Right ventricle myocardium inferior (tissue), 1 donor: ENCODE measurements at regions of chr13 and their contacts with region 1.

Region 1: DNA sequence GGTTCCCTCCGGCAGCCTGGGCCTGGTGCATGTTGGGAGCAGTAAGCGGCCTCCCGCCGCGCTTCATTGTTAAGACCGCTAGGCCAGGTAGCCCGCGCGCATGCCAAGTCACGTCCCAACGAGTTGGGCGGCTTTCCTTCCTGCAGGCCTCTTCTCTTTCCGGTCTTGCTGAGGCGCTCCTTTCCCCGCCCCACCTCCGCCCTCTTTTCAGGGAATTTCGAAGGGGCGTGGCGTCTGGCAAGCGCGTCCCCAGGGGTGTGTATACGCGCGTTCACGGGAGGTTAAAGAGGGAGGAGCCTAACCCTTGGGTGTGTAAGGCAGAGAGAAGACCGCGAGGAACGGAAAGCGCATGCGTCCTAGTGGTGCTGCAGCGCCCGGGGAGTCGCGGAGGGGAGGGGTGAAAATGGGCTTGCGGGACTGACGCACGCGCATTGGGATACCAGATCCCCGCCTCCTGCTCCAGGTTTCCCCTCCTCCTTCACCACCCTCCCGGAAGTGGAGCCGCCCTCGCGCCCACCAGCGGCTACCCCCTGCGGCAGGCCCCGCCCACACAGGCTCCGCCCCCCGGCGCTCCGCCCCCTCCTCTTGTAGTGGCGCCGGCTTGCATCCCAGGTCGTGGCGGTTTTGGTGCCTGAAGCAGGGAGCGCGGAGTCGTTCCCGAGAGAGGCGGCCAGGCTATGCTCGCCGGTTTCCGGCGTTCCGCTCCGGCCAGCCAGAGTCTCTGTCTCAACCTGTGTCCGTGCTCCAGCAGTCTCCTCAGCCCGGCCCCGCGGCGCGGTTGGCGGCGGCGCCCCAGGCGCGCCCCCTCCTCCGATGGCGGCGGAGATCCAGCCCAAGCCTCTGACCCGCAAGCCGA is at the start of gene WDFY2:
- DNase-seq: peak; percentile 99
- ATAC-seq: peak; percentile 96
- total RNA-seq, gene WDFY2: 4.7 TPM

Region 2: DNA sequence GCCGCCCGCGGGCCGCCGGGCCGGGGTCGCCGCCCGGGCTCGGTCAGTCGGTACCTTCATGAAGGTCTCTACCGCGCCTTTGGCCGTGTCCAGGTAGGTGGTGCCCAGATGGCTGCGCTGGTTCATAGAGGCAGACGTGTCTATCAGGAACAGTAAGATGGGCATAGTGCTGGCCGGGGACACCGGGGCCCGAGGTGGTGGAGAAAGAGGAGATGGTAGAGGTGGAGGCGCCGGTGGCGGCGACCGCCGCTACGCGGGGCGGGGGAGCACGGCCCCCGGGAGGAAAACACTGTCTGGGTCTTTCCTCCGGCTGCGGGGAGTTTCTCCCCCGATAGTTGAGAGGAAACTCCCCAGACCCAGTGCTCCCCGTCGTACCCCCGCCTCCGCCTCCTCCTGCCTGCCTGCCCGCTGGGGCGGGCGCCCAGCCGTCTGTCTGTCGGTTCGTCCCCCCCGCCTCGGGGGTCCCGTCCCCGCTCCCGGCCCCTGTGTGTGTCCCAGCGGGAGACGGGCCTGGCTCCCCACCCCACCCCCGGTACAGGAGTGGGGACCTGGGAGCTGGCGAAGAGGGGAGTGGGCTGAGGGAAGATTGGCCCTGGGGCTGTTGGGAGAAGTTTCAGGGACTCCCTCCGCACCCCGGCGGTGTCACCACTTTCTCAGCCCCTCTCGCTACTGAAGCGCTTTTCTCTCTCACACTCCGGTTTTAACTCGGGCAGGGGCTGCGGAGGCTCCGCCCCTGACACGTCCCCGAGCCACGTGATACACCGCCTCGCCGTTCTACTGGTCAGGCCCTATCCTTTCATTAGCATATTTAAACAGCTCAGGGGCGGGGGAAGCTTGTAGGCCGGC is 131.5 kb before region 1 on chr13 and contains the start of gene INTS6:
- intact Hi-C with region 1: loop called (anchors 1 kb)
- DNase-seq: peak; percentile 100
- ATAC-seq: peak; percentile 95
- total RNA-seq, gene INTS6: 22.7 TPM

Region 3: DNA sequence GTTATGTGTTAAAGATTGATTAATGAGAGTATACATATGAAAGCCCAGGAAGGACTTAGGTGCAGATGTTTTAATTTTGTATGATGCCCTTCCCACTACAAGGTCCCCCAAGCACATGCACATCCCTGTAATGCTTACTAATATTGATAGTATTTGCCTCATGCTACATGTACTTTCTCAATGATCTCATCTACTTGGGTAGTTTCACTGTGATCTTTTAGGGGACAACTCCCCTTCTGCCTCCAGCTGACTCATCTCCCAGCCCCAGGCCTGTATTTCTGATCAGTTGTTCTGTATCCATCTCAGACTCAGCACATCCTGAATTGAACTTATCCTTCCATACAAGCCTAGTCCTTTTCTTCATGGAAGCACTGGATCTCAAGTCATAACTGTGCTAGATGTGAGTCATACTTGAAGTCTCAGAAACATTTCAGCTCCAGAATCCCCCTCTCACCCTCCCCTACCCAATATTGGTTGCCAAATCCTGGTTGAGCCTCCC is 81.9 kb before region 1 on chr13:
- intact Hi-C with region 1: no loop called
- DNase-seq: no peak
- ATAC-seq: no peak

Region 4: DNA sequence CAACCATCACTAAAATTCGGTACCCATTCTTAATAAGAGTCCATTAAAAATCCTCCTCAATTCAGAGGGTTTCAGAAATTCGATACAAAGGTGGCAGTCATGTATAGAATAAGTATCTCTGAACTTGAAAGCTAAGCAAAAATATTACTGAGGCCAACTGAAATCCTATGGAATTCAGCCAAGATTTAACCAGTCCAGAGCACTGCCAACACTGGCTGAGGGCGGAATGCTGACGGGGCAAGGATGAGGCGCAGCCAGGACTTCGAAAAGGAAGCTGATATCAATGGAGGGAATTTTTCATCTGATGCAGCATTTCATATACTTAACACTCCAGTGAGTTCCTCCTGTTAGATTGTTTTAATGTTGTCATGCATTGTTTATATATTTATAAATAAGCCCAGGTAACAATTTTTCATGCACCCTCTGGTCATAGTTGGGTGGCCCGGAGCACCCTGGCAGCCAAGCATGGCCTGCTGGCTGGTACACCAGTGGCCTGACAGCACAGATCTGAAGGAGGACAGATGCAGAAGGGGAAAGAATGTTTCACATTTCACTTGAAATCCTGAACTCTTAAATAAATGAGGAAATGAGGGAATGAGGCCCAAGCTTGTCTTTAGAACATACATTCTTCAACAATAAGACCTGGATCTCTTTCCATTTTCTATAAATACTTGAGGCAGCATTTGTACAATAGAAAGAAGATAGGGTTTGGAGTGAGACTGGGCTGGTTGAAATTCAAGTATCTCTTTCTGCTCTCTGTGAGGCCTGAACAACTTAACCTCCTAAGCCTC is 41.6 kb after region 1 on chr13:
- intact Hi-C with region 1: loop called (anchors 5 kb)
- DNase-seq: no peak
- ATAC-seq: peak; percentile 69

Region 5: GRCh38 chr13:51803422-51804294 is 219.6 kb after region 1 on chr13 and contains the start of gene DHRS12:
- intact Hi-C with region 1: loop called (anchors 5 kb)
- DNase-seq: peak; percentile 97
- ATAC-seq: peak; percentile 89
- total RNA-seq, gene DHRS12: 10.2 TPM